MCF 10A (cell line): ENCODE measurements at regions of chr1 and their contacts with region 1.

Region 1: DNA sequence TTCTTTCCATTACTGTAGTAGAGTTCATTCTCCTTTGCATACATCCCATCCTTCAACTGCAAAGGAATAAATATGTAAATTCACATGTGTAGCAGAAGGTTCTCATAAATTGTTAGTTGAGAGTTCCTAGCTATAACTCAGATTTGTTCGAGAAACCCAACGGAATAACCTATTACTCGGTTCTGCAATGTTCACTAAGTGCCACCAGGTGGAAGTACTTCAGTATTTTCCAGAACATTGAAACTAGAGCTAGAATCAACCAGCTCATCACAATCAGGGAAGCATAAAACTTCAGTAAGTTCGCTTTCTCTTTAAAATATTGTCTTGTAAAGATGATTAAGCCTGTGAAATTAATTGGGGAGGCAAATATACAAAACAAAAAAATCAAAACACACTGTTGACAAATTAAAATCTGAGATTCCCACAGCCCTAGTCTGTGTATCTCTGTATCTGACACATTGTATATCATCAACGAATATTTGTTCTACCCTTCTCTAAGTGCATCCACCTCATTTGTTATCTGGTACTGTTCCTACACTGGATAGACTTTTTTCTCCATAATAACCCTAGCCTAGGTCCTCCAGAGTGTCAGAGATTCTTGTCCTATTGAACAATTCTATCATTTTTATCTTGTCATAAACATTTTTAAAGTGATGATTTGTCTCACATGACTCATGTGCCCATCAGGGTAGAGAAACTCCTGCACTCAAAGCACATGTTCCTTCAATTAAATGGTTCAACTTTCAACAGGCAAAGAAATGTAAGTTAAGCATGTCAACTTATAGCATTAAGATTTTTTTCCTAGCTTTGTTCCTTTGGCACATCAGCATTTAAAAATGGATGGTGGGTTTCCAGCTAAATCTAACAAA is 31.9 kb downstream of the MROH9 start:
- DNase-seq: peak; percentile 73
- H3K4me3 Mint-ChIP-seq: no peak overlapping the region
- H3K27ac Mint-ChIP-seq: no peak overlapping the region
- H3K4me1 Mint-ChIP-seq: peaks cover 10% of the 10 kb centered on the region
- H3K27me3 Mint-ChIP-seq: no peaks in the 10 kb centered on the region
- CTCF ChIP-seq: peak; percentile 74

Region 2: DNA sequence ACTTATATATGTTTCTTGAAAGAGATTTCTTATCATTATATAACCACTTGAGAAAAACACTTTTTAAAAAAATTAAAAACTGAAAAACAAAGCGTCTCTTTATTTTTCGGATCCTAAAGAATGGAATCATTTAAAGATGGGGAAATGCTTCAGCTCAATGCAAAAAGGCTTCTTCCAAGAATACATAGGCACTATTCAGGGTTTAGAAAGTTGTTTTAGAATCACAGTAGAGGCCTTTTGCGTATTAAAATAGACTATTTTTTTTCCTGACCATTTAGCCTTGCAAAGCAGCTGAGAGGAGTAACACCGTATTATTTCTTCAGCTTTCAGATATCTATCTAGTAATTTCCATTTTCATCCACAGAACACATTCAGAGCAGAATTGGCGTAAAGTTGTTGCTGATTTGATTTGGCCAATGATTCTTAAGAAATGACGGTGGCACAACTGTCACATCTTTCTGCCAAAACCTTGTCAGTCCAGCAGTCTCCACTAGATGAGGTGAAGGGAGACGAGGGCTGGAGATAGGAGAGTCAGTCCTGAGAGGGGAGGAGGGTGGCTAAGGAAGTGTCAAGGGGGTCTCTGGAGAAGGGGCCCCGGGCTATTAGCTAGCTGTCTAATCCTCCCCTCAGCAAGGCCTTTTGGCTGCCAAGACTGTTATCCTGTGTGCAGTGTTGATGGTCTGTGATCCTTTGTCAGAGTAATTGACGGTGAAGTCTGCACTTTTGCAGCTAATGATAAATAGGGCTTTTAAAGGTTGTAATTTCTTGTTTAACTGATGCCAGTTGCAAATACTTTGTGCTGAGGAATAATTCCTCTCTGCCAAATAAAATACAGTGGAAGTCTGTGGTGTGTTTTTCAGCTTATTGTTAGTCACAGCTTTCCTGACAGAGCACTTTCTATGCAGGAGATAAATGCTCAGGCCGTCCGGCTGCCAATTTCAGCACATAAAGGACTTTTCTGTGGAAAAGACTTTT is 268.7 kb before region 1 on chr1:
- CTCF ChIA-PET with region 1: no interaction called
- POLR2A ChIA-PET with region 1: no interaction called
- intact Hi-C with region 1: no loop called
- DNase-seq: no peak
- H3K4me3 Mint-ChIP-seq: no peak overlapping the region
- H3K27ac Mint-ChIP-seq: no peak overlapping the region
- H3K4me1 Mint-ChIP-seq: peaks cover 12% of the 10 kb centered on the region
- H3K27me3 Mint-ChIP-seq: no peaks in the 10 kb centered on the region
- CTCF ChIP-seq: no peak

Region 3: GRCh38 chr1:170929835-170930554 is 37.3 kb before region 1 on chr1:
- CTCF ChIA-PET with region 1: interaction called, 12 read pairs
- POLR2A ChIA-PET with region 1: no interaction called
- intact Hi-C with region 1: no loop called
- DNase-seq: peak; percentile 83
- H3K4me3 Mint-ChIP-seq: no peak overlapping the region
- H3K27ac Mint-ChIP-seq: peak overlapping the region; percentile 4
- H3K4me1 Mint-ChIP-seq: peaks cover 12% of the 10 kb centered on the region
- H3K27me3 Mint-ChIP-seq: no peaks in the 10 kb centered on the region
- CTCF ChIP-seq: peak; percentile 78

Region 4: DNA sequence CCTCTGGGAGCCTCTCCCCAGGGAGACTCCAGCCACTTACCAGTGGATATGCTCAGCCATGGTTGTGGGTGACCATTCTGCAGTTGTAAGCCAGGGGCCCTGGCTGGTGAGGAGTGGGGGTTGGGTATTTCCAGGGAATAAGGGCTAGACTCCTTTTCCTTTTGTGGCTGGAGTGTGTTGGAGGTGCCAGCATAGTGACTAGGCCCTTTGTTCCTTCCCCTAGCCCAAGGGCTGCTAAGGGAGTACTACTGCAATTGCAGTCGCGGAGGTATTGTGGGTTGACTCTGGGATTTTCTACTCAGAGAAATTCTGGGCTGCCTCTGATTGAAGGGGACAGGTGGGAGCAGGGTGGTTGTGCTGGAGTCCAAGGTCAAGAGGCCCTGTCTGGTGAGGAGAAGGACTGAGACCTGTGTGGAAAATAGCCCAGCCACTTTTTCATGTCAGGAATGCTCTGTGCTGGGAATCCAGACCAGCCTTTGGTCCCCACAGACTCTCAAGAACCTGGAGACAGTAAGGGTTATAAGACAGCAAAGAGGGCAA is 11.2 kb after region 1 on chr1:
- CTCF ChIA-PET with region 1: interaction called, 21 read pairs
- POLR2A ChIA-PET with region 1: interaction called, 3 read pairs
- intact Hi-C with region 1: no loop called
- DNase-seq: no peak
- H3K4me3 Mint-ChIP-seq: no peak overlapping the region
- H3K27ac Mint-ChIP-seq: no peak overlapping the region
- H3K4me1 Mint-ChIP-seq: no peaks in the 10 kb centered on the region
- H3K27me3 Mint-ChIP-seq: no peaks in the 10 kb centered on the region
- CTCF ChIP-seq: no peak

Region 5: GRCh38 chr1:171081314-171081753 is 114.1 kb after region 1 on chr1:
- CTCF ChIA-PET with region 1: interaction called, 15 read pairs
- POLR2A ChIA-PET with region 1: no interaction called
- intact Hi-C with region 1: no loop called
- DNase-seq: peak; percentile 52
- H3K4me3 Mint-ChIP-seq: no peak overlapping the region
- H3K27ac Mint-ChIP-seq: no peak overlapping the region
- H3K4me1 Mint-ChIP-seq: no peaks in the 10 kb centered on the region
- H3K27me3 Mint-ChIP-seq: no peaks in the 10 kb centered on the region
- CTCF ChIP-seq: peak; percentile 34

Region 6: DNA sequence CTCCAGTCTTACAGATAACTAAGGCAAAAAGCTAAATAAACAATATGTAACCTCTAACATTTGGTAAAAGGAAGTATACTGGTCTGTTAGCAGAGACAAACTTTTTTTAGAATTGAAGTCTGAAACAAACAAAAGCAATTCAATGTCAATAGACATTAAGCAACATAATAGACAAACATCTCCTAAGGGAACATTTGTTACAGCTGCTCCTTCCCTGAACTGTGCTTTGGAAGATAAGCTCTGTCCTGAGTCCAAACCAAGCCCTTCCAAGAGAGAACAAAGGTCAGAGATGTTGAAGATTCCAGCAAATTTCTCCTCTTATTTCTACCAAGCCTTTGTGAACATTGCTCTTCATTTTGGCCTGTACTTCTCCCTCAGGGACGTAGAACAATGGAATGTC is 243.1 kb after region 1 on chr1:
- CTCF ChIA-PET with region 1: interaction called, 13 read pairs
- POLR2A ChIA-PET with region 1: no interaction called
- intact Hi-C with region 1: no loop called
- DNase-seq: no peak
- H3K4me3 Mint-ChIP-seq: no peak overlapping the region
- H3K27ac Mint-ChIP-seq: no peak overlapping the region
- H3K4me1 Mint-ChIP-seq: no peaks in the 10 kb centered on the region
- H3K27me3 Mint-ChIP-seq: no peaks in the 10 kb centered on the region
- CTCF ChIP-seq: no peak

Region 7: DNA sequence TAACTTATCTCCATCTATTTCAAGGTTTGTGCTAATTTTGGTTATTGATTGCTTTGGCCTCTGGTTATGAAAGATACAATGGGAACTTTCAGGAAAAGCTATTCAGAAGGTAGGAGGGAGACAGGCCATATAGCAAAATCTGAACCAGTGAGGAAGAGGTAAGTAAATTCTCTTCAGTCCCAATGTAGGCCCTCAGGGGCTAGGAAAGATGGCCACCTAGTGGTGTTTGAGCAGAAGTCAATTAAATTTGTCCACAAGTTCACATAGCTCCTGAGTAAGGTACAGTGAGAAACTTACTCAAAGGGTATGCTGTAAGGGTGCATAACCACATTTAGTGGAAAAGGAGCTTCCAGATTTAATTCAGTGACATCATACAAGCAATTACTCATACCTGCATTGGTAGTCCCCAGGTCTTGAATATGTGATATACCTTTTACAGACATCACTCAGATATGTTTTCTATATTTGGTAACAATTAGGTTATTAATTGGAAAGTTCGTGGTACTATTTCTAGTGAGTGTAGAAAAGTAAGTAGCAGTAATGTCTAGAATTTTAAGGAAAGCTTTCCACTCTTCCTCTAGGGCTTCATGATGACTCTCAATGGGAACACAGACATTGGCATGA is 259.6 kb after region 1 on chr1:
- CTCF ChIA-PET with region 1: interaction called, 262 read pairs
- POLR2A ChIA-PET with region 1: interaction called, 4 read pairs
- intact Hi-C with region 1: loop called (anchors 1 kb)
- DNase-seq: peak; percentile 85
- H3K4me3 Mint-ChIP-seq: no peak overlapping the region
- H3K27ac Mint-ChIP-seq: no peak overlapping the region
- H3K4me1 Mint-ChIP-seq: peaks cover 21% of the 10 kb centered on the region
- H3K27me3 Mint-ChIP-seq: no peaks in the 10 kb centered on the region
- CTCF ChIP-seq: peak; percentile 96

Region 8: DNA sequence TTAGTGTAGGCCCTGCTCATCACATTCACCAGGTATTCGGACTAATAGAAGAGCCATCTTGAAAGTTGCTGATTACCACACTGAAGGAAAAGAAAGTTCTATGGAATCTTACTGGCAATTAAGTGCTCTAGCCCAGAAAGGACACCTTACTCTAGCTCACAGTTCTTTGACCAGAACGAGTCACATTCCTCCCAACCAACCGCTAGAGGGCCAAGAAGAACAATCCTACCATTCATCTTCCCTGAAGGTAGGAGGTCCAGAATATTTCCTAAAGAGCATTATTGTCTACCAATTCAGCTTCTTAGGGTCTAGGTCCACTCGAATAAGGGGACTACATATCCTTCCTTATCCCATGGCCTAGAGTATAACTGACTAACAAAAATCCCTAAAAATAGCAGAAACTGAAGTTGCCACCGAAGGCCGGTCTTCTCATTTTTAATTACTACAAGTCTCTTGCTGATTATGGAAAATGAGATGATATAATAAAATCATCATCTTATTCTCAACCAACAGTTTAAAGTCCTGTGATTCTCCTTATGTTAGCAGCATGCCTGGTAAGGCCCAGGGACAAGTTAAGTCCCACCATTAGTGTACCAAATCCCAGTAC is 278.3 kb after region 1 on chr1:
- CTCF ChIA-PET with region 1: interaction called, 19 read pairs
- POLR2A ChIA-PET with region 1: no interaction called
- intact Hi-C with region 1: no loop called
- DNase-seq: peak; percentile 77
- H3K4me3 Mint-ChIP-seq: no peak overlapping the region
- H3K27ac Mint-ChIP-seq: no peak overlapping the region
- H3K4me1 Mint-ChIP-seq: no peaks in the 10 kb centered on the region
- H3K27me3 Mint-ChIP-seq: peaks cover 15% of the 10 kb centered on the region
- CTCF ChIP-seq: peak; percentile 78